PC-3 (cell line): ENCODE measurements at regions of chr7 and their contacts with region 1.

Region 1: DNA sequence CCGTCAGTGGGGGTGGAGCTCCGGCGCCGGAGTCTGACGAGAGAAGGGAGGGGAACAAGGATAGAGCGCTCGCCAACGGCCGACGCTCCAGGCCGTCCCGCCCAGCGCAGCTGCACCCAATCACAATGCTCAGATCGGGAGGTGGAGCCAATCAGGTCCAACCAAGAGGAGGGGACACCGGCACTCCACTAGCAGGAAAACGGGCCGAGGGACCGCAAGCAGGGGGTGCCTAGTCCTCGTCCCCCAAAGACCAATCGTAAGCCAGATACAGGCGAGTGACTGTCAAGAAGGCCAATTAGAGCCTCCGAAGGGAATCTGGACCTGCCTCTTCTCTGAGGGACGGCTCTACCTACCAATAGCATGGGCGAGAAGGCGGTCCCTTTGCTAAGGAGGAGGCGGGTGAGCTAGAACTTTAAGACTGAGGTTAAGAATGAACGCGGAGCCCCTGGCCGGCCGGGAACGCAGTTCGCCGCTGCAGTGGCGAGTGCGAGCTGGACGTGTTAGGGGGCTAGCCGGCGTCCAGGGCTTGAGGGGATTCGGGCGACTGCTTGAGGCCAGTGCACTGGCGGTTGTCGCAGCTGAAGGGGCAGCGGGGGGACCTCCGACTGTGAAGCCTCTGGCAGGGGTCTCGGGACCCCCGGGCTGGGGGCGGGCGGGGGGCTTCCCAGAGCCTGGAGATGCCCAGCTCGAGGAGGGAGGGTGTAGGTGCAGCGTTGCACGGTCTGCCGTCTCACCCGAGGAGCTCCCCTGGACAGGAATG is at the start of gene FBXO24:
- DNase-seq: peak; percentile 99
- ATAC-seq: peak; percentile 84
- H3K4me3 ChIP-seq: peak within 1 kb of the TSS; percentile 78
- H3K27ac ChIP-seq: peak within 1 kb of the TSS; percentile 77
- H3K4me1 ChIP-seq: peaks cover 17% of the 10 kb centered on the region
- H3K27me3 ChIP-seq: no peaks in the 10 kb centered on the region
- CTCF ChIP-seq: no peak
- total RNA-seq, gene FBXO24: 0.40 TPM in 1 of 2 replicates, not detected in the other

Region 2: GRCh38 chr7:100342765-100343164 is 243.7 kb before region 1 on chr7:
- CTCF ChIA-PET with region 1: no interaction called
- POLR2A ChIA-PET with region 1: no interaction called
- intact Hi-C with region 1: no loop called
- DNase-seq: no peak
- ATAC-seq: no peak
- H3K4me3 ChIP-seq: no peak overlapping the region
- H3K27ac ChIP-seq: no peak overlapping the region
- H3K4me1 ChIP-seq: peaks cover 9% of the 10 kb centered on the region; the same call in 1 of the 2 replicates
- H3K27me3 ChIP-seq: no peaks in the 10 kb centered on the region
- CTCF ChIP-seq: no peak

Region 3: GRCh38 chr7:100428199-100428966 is 158.1 kb before region 1 on chr7 and contains the start of gene ZCWPW1:
- CTCF ChIA-PET with region 1: interaction called, 6 read pairs
- POLR2A ChIA-PET with region 1: interaction called, 6 read pairs
- intact Hi-C with region 1: loop called (anchors 1 kb)
- DNase-seq: peak; percentile 90
- ATAC-seq: peak; percentile 66
- H3K4me3 ChIP-seq: peak within 1 kb of the TSS; percentile 80
- H3K27ac ChIP-seq: peak within 1 kb of the TSS; percentile 98
- H3K4me1 ChIP-seq: peaks cover 19% of the 10 kb centered on the region
- H3K27me3 ChIP-seq: no peaks in the 10 kb centered on the region
- CTCF ChIP-seq: no peak
- total RNA-seq, gene ZCWPW1: 1.4 and 2.2 TPM in 2 replicates

Region 4: GRCh38 chr7:100538654-100539435 is 47.6 kb before region 1 on chr7 and contains the start of gene AGFG2:
- CTCF ChIA-PET with region 1: no interaction called
- POLR2A ChIA-PET with region 1: interaction called, 17 read pairs
- intact Hi-C with region 1: no loop called
- DNase-seq: peak; percentile 99
- ATAC-seq: peak; percentile 97
- H3K4me3 ChIP-seq: peak within 1 kb of the TSS; percentile 78
- H3K27ac ChIP-seq: 0 out of 2 replicates have a peak within 1 kb of the TSS, but pooled peaks have one; percentile 2
- H3K4me1 ChIP-seq: peaks cover 13% of the 10 kb centered on the region
- H3K27me3 ChIP-seq: no peaks in the 10 kb centered on the region
- CTCF ChIP-seq: no peak
- total RNA-seq, gene AGFG2: 16.9 and 18.2 TPM in 2 replicates

Region 5: DNA sequence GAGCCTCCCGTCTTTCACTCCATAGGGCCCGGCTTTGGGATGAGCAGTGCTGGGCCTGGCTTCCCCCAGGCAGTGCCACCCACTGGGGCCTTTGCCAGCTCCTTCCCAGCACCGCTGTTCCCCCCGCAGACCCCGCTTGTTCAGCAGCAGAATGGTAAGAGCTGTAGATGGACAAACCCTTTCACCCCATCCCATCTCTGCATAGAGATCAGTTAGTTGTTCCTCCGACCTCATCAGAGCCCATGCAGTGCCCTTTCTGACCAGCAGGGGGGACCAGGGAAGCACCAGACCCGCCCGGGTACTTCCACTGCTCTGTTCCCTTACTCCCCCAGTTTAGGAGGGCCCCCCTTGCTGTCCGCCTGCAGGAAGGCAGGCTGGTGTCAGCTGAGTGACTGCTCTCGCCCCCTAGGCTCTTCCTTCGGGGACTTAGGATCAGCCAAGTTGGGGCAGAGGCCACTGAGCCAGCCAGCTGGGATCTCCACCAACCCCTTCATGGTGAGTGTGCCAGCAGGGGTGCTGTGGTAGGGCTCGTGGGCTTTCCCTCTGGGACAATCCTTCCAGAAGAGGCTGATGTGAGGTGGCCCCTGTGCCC is 22.5 kb before region 1 on chr7:
- CTCF ChIA-PET with region 1: interaction called, 12 read pairs
- POLR2A ChIA-PET with region 1: interaction called, 3 read pairs
- intact Hi-C with region 1: loop called (anchors 1 kb)
- DNase-seq: peak; percentile 68
- ATAC-seq: peak; percentile 76
- H3K4me3 ChIP-seq: no peak overlapping the region
- H3K27ac ChIP-seq: no peak overlapping the region
- H3K4me1 ChIP-seq: no peaks in the 10 kb centered on the region
- H3K27me3 ChIP-seq: no peaks in the 10 kb centered on the region
- CTCF ChIP-seq: peak; percentile 87

Region 6: GRCh38 chr7:100673300-100673941 is 87.0 kb after region 1 on chr7 and contains the start of gene GNB2:
- CTCF ChIA-PET with region 1: interaction called, 3 read pairs
- POLR2A ChIA-PET with region 1: interaction called, 12 read pairs
- intact Hi-C with region 1: loop called (anchors 1 kb)
- DNase-seq: peak; percentile 97
- ATAC-seq: peak; percentile 73
- H3K4me3 ChIP-seq: peak within 1 kb of the TSS; percentile 100
- H3K27ac ChIP-seq: peak within 1 kb of the TSS; percentile 91
- H3K4me1 ChIP-seq: no peaks in the 10 kb centered on the region
- H3K27me3 ChIP-seq: no peaks in the 10 kb centered on the region
- CTCF ChIP-seq: no peak
- total RNA-seq, gene GNB2: 164 and 227 TPM in 2 replicates